HEK293 (cell line): ENCODE measurements at regions of chr1 and their contacts with region 1.

Region 1: GRCh38 chr1:112798292-112798691 is 83.2 kb upstream of the PPM1J start:
- H3K4me3 ChIP-seq: no peak overlapping the region
- H3K27ac ChIP-seq: no peak overlapping the region
- H3K4me1 ChIP-seq: no peaks in the 10 kb centered on the region
- CTCF ChIP-seq: no peak

Region 2: GRCh38 chr1:112748396-112748795 is 49.9 kb before region 1 on chr1:
- CTCF ChIA-PET with region 1: no interaction called
- POLR2A ChIA-PET with region 1: no interaction called
- H3K4me3 ChIP-seq: no peak overlapping the region
- H3K27ac ChIP-seq: no peak overlapping the region
- H3K4me1 ChIP-seq: no peaks in the 10 kb centered on the region
- CTCF ChIP-seq: no peak

Region 3: DNA sequence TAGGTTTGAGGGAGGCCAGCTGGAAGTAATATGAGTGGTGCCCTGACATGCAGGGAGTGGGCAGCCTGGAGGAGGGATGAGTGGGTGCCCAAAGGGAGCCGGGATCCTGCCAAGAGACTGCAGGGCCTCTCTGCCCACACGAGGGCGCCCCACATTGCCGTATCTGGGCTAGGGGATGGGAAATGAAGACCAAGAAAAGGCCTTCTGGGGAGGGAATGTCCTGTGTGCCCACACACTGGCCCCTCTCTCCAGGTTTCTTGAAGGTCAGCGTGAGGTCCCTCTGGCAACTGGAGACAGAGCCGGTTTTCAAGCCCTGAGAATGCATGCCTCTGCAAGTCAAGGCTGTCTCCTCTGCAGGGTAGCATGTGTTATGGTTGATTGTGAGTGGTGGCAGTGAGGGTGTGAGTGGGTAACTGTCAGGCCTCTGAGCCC is 11.0 kb after region 1 on chr1:
- CTCF ChIA-PET with region 1: interaction called, 17 read pairs
- POLR2A ChIA-PET with region 1: no interaction called
- H3K4me3 ChIP-seq: no peak overlapping the region
- H3K27ac ChIP-seq: no peak overlapping the region
- H3K4me1 ChIP-seq: no peaks in the 10 kb centered on the region
- CTCF ChIP-seq: peak; percentile 84

Region 4: DNA sequence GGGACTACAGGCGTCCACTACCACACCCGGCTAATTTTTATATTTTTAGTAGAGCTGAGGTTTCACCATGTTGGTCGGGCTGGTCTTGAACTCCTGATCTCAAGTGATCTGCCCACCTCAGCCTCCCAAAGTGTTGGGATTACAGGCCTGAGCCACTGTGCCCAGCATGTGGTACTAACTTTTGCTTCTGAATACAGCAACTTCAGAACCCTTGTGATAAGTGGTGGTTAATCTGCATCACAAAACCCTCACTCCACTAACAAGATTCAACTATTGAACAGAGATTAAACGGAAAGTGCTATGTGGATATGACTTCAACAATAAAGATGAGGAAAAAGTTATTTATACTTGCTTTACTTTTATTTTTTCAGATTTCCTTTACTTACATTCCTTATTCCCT is 113.2 kb after region 1 on chr1:
- CTCF ChIA-PET with region 1: no interaction called
- POLR2A ChIA-PET with region 1: no interaction called
- H3K4me3 ChIP-seq: no peak overlapping the region
- H3K27ac ChIP-seq: no peak overlapping the region
- H3K4me1 ChIP-seq: no peaks in the 10 kb centered on the region
- CTCF ChIP-seq: no peak

Region 5: DNA sequence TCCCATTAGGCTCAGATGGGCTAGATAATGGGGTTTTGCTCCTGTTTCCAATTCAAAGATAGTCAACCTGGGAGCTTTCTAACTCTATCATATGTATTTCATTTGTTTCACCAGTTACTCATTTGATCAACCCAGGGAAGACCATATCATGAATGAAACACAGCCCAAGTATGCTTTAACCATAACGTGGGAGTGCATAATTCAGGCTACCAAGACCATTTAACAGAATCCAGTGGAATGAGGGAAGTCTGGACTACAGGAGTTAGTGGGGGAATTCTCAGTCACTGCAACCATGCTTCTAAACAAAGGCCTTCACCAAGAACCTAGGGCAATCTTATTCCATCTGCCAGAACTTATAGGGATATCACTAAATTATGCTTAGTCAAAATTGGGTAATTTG is 172.7 kb after region 1 on chr1:
- CTCF ChIA-PET with region 1: no interaction called
- POLR2A ChIA-PET with region 1: no interaction called
- H3K4me3 ChIP-seq: no peak overlapping the region
- H3K27ac ChIP-seq: no peak overlapping the region
- H3K4me1 ChIP-seq: no peaks in the 10 kb centered on the region
- CTCF ChIP-seq: no peak